Dorsolateral prefrontal cortex (tissue), 120 donors: ENCODE measurements at regions of chr17 and their contacts with region 1.

Region 1: DNA sequence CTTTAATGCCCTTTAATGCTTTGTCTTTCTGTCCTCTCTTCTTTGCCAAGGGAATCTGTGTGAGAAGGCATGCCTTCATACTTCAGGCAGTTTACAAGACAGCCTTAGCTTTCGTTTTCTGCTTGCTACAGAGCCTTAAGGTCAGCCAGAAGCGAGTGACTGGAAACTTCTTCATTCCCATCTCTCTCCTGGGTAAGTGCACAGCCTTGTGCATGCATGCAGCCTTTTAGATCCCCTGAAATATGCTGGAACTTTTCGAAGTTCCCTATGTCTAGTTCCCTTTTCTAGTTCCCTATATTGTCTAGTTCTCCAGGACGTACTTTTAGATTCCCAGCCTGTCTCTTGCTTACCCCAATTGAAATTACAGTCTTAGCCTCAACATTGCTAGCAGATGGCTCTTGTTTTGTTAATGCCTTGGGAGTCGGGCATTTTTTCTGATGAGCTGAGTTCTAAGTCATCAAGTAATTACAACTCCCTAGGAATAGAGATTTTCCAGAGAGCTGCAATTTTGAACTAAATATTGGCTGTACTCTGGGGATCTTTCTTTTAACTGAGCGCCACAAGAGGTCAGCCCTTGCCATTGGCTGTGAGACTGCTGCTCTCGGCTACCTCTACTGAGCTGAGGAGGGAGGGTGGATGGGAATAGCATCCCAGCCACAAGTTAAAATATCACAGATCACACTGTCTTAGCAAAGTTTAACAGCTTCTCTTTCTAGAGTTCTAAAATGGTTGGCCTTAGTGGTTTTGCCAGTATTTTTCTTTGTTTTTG is 22.7 kb upstream of the PPM1D start:
- DNase-seq: peak in 6 of 10 donors; percentile 30 to 57 (median 46)
- H3K4me3 ChIP-seq: peak overlapping the region in 57 of 59 donors; percentile 0 to 60 (median 41)
- H3K27ac ChIP-seq: peak overlapping the region in 49 of 59 donors; percentile 3 to 82 (median 55)
- H3K27me3 ChIP-seq: no peaks in the 10 kb centered on the region
- CTCF ChIP-seq: peak in 54 of 56 donors; percentile 21 to 79 (median 55)

Region 2: GRCh38 chr17:60641810-60642220 is 64.5 kb after region 1 on chr17:
- intact Hi-C with region 1: loop called (anchors 2 to 5 kb)
- DNase-seq: peak in 8 of 10 donors; percentile 39 to 77 (median 56)
- H3K4me3 ChIP-seq: no peak overlapping the region
- H3K27ac ChIP-seq: peak overlapping the region in 51 of 59 donors; percentile 7 to 81 (median 53)
- H3K27me3 ChIP-seq: no peaks in the 10 kb centered on the region
- CTCF ChIP-seq: peak in 55 of 56 donors; percentile 24 to 84 (median 63)